Endothelial cell of umbilical vein (primary cell): ENCODE measurements at regions of chr2 and their contacts with region 1.

Region 1: GRCh38 chr2:237413777-237414661 is at the start of gene COL6A3:
- DNase-seq: no peak
- H3K4me3 ChIP-seq: no peak within 1 kb of the TSS
- H3K27ac ChIP-seq: no peak within 1 kb of the TSS
- H3K4me1 ChIP-seq: no peaks in the 10 kb centered on the region
- H3K27me3 ChIP-seq: peaks cover 7 to 15% of the 10 kb centered on the region in 2 experiments
- CTCF ChIP-seq: no peak
- POLR2A ChIP-seq: no peak
- total RNA-seq, gene COL6A3: not detected in 2 replicates

Region 2: GRCh38 chr2:237122214-237122666 is 291.8 kb before region 1 on chr2:
- CTCF ChIA-PET with region 1: interaction called, 22 read pairs
- POLR2A ChIA-PET with region 1: no interaction called
- dilution Hi-C with region 1: no loop called
- intact Hi-C with region 1: no loop called
- DNase-seq: peak; percentile 64
- H3K4me3 ChIP-seq: no peak overlapping the region
- H3K27ac ChIP-seq: no peak overlapping the region
- H3K4me1 ChIP-seq: peaks cover 3% of the 10 kb centered on the region
- H3K27me3 ChIP-seq: no peaks in the 10 kb centered on the region
- CTCF ChIP-seq: peak; percentile 64 to 73
- POLR2A ChIP-seq: no peak

Region 3: DNA sequence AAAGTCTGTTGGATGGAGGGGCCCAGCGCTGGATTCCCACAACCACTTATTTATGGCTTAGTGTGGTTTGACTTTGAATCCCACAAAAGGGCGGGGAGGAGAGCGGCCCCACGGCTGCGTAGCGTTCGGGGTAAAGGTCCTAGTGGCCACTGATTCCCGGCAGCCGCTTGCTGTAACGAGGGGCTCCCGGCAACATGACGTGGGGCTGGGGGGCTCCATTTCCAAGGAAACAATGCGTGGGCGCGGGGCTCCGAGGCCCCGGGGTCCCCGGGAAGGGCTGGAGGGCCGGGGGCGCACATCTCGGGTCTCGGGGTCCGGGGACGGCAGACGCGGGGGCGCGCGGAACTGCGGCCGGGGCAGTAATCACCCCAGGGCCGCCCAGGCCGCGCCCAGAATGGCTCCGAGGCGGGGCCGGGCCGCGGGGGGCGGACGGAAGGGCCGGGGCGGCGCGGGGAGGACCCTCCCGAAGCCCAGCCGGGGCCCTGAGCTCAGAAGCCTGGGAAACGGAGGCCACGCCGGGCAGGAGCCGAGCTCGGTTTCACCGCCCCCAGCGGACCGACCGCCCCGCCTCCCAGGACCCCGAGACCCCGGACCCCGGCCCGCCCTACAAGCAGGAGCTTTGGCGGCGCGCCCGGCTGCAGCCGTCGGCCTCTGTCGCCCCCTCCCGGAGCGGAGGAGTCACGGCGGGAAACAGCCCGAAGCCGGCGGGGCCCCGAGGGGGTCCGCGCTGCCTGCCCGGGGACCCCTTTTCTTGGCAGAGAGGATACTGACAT is 61.1 kb after region 1 on chr2:
- CTCF ChIA-PET with region 1: interaction called, 110 read pairs
- POLR2A ChIA-PET with region 1: no interaction called
- dilution Hi-C with region 1: no loop called
- intact Hi-C with region 1: no loop called
- DNase-seq: peak; percentile 54
- H3K4me3 ChIP-seq: peak overlapping the region; percentile 38 to 51 (median 40)
- H3K27ac ChIP-seq: peak overlapping the region; percentile 23
- H3K4me1 ChIP-seq: peaks cover 12% of the 10 kb centered on the region
- H3K27me3 ChIP-seq: peaks cover 36 to 42% of the 10 kb centered on the region in 2 experiments
- CTCF ChIP-seq: peak; percentile 73 to 93
- POLR2A ChIP-seq: peak; percentile 23

Region 4: DNA sequence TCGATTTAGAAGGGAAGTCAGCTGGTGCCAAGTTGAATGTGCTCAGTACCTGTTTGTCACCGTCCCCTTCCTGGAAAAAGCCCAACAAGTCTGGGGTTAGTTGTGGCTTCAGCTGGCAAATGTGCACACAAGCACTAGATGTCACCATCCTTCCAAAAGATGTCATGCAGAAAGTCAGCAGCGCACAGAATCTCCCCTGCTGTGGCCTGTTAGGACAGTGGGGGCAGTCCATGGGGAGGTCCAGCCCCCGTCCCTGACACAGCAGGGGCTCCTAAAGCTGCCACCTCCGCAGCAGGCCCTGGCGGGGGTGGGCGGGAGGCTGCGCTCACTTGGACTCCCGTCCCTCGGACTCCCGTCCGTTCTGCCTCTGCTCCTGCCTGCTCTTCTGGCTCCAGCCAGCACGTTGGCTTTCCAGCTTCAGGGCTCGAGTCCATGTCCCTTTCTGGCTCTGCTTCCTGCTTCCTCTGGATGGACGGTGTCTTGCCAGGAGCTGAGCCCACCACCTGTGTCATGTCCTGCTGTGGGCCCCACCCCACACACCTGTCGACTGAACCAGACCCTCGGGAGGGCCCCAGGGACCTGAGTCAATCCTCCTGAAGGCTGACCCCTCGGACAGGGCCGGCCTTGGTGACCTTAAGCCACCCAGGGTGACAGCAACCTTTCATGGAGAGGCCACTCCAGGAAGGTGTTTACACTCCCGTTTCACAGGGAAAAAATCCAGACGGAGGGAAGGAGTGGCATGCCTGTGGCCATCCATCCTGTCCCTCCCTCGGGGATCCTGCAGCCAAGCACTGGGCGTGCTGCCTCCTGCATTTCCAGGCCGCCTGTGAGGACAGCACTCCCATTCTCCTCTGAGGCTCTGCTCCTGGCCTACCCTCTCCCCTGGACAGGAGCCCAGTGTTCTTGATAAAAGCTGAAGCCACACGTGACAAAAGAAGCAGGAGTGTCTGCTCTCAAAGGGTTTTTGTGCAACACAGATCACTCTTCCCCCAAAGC is 168.0 kb after region 1 on chr2:
- CTCF ChIA-PET with region 1: no interaction called
- POLR2A ChIA-PET with region 1: no interaction called
- dilution Hi-C with region 1: no loop called
- intact Hi-C with region 1: no loop called
- DNase-seq: peak; percentile 79
- H3K4me3 ChIP-seq: no peak overlapping the region
- H3K27ac ChIP-seq: no peak overlapping the region
- H3K4me1 ChIP-seq: no peaks in the 10 kb centered on the region
- H3K27me3 ChIP-seq: peaks cover 2% of the 10 kb centered on the region in 2 experiments
- CTCF ChIP-seq: peak; percentile 55 to 61
- POLR2A ChIP-seq: no peak